ENCODE measurements at regions of chr15 and their contacts with region 1.

Region 1: DNA sequence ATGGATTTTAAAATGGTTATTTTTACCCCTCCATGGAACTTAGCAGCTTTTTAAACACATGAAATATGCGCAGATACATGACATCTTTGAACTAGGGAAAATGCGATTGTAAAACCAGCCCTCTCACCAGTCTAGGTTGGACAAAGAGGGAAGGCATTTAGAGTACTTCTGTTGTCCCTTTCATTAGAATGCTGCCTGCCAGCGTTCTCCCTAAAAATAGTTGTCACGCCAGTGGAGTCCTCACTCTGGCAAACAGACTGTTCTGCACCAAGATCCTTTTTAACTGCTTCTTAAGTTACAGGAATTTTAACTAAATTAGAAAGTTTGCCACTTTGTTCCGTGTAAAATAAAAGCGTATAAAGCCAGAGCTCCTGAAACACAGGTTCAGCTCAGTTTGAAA is 295.3 kb downstream of the VPS13C start:
- DNase-seq: no peak
- ATAC-seq: no peak
- H3K4me3 ChIP-seq: no peak overlapping the region
- H3K27ac ChIP-seq: no peak overlapping the region
- H3K4me1 ChIP-seq: no peaks in the 10 kb centered on the region
- H3K27me3 ChIP-seq: no peaks in the 10 kb centered on the region
- CTCF ChIP-seq: no peak
- POLR2A ChIP-seq: no peak
- RAD21 ChIP-seq: no peak

Region 2: DNA sequence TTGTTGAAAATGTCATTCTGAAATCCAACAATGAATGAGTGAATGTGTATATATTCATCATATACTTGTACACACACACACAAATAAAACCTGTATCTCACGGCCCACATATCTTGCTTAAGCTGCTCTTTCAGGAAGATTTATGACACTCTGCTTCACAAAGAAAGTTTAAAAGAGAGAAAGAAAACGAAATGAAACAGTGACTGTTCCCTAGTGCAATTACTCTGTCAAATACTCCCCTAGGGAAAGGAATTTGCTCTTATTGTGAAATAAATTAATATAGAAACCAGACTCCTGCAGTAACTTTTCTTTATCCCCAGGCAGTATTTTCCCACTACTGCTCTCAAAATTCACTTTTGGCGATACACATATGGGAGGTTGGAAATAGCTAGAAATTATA is 33.9 kb before region 1 on chr15:
- CTCF ChIA-PET with region 1: no interaction called
- POLR2A ChIA-PET with region 1: no interaction called
- dilution Hi-C with region 1: no loop called
- in situ Hi-C with region 1: no loop called
- intact Hi-C with region 1: loop called (anchors 2 kb)
- DNase-seq: no peak
- ATAC-seq: no peak
- H3K4me3 ChIP-seq: no peak overlapping the region
- H3K27ac ChIP-seq: no peak overlapping the region
- H3K4me1 ChIP-seq: no peaks in the 10 kb centered on the region
- H3K27me3 ChIP-seq: peaks cover 2% of the 10 kb centered on the region; the same call in 1 of the 2 replicates
- CTCF ChIP-seq: no peak
- POLR2A ChIP-seq: no peak
- RAD21 ChIP-seq: no peak